ENCODE measurements at regions of chr1 and their contacts with region 1.

Region 1: GRCh38 chr1:109397538-109398342 is at the start of gene SORT1:
- DNase-seq: peak; percentile 67
- H3K4me3 Mint-ChIP-seq: peak within 1 kb of the TSS; percentile 77
- H3K27ac Mint-ChIP-seq: no peak within 1 kb of the TSS
- H3K4me1 Mint-ChIP-seq: peaks cover 17% of the 10 kb centered on the region
- H3K27me3 Mint-ChIP-seq: peaks cover 38% of the 10 kb centered on the region

Region 2: GRCh38 chr1:109201123-109201703 is 196.5 kb before region 1 on chr1:
- CTCF ChIA-PET with region 1: interaction called, 37 read pairs
- DNase-seq: peak; percentile 62
- H3K4me3 Mint-ChIP-seq: no peak overlapping the region
- H3K27ac Mint-ChIP-seq: no peak overlapping the region
- H3K4me1 Mint-ChIP-seq: peaks cover 14% of the 10 kb centered on the region
- H3K27me3 Mint-ChIP-seq: peaks cover 16% of the 10 kb centered on the region

Region 3: GRCh38 chr1:109263597-109264398 is 133.9 kb before region 1 on chr1:
- CTCF ChIA-PET with region 1: interaction called, 21 read pairs
- DNase-seq: peak; percentile 86
- H3K4me3 Mint-ChIP-seq: no peak overlapping the region
- H3K27ac Mint-ChIP-seq: no peak overlapping the region
- H3K4me1 Mint-ChIP-seq: peaks cover 3% of the 10 kb centered on the region
- H3K27me3 Mint-ChIP-seq: peaks cover 9% of the 10 kb centered on the region

Region 4: DNA sequence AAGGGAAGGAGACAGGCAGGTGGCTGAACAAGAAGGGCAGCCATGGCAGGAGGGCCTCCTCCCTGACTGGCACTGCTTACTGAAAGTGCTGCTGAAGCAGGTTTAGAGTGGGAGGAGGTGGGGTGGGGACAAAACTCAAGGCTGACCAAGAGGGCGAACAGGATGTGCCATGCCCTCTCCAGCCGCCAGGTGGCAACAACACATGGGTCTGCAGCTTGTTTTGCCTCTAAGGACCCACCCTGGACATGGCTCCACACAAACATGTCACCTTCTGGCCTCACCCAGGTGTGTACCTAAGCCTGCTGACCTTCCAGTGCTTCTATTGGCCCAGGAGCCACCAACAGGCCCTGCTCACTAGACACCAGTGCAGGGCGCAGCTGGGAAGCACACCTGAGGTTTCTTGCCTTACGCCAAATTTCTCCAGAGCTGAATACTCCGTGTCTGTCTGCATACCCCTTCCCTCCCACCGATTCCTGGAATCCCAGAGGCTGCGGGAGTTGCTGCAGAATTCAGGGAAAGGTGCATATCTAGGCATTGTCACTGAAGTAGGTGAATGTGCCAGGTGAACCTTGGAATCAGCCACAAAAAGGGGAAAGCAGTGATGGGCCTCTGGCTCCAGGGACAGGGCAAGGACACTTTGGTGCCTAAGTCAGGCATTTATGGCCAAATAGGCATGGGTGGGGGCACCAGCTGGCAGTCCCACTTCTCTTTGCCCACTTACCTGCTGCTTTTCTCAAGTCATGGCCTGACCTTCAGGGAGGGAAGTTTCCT is 120.1 kb before region 1 on chr1:
- CTCF ChIA-PET with region 1: interaction called, 115 read pairs
- DNase-seq: peak; percentile 76
- H3K4me3 Mint-ChIP-seq: no peak overlapping the region
- H3K27ac Mint-ChIP-seq: peak overlapping the region; percentile 24
- H3K4me1 Mint-ChIP-seq: peaks cover 40% of the 10 kb centered on the region
- H3K27me3 Mint-ChIP-seq: peaks cover 4% of the 10 kb centered on the region

Region 5: DNA sequence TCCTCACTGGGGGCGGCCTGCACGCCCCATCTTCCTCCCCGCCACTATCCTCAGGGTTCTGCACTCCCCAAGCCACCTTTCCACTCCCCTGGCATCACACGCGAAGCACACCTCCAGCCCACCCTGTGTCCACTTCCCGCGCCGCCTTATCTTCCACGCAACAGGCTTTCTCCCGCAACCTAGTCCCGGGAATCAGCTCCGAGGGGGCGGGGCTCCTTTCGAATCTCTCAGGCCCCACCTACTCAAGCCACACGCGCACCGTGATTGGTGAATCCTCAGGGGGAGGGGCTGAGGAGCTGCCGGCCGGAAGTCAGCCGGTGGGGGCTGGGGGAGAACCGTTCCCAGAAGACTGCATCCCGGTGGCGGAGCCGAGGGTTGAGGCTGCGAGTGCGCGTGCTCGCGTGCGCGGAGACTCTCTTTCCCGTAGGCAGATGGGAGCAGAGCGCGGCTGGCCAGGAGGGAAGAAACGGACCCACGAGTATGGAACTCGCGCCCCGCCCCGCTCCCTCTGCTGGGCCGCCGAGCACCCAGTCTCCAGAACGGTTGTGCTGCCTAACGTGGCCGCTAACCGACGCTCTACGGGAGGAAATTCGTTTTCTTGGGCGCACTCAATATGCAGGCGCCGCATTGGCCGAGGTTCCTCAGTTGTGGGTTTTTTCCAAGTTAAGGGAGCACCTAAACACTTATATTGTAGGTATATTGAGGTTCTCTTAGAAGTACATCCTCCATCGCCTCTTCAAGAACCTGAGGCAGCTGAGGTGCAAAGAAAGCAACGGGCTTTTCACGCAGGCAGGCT is 114.6 kb before region 1 on chr1 and contains the start of gene PSRC1:
- CTCF ChIA-PET with region 1: interaction called, 115 read pairs
- DNase-seq: peak; percentile 95
- H3K4me3 Mint-ChIP-seq: peak within 1 kb of the TSS; percentile 98
- H3K27ac Mint-ChIP-seq: peak within 1 kb of the TSS; percentile 90
- H3K4me1 Mint-ChIP-seq: peaks cover 38% of the 10 kb centered on the region
- H3K27me3 Mint-ChIP-seq: peaks cover 13% of the 10 kb centered on the region

Region 6: DNA sequence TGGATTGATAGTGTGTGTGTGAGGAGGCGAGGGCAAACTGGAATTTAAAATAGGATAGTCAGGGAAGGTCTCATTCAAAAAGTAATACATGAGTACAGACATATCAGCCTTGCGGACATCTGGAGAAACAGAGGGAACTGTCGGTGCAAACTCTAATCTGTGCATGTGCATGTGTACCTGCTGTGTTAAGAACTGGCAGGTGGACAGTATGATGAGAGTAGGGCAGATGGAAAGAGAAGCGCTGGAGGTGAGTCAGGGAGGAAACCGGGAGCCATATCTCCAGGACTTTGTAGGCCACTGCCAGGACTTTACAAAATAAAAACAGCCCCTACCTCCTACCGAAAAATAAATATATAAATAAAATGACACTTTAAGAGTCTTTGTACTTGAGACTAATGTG is 59.6 kb before region 1 on chr1:
- CTCF ChIA-PET with region 1: no interaction called
- DNase-seq: no peak
- H3K4me3 Mint-ChIP-seq: no peak overlapping the region
- H3K27ac Mint-ChIP-seq: no peak overlapping the region
- H3K4me1 Mint-ChIP-seq: no peaks in the 10 kb centered on the region
- H3K27me3 Mint-ChIP-seq: peaks cover under 1% of the 10 kb centered on the region

Region 7: DNA sequence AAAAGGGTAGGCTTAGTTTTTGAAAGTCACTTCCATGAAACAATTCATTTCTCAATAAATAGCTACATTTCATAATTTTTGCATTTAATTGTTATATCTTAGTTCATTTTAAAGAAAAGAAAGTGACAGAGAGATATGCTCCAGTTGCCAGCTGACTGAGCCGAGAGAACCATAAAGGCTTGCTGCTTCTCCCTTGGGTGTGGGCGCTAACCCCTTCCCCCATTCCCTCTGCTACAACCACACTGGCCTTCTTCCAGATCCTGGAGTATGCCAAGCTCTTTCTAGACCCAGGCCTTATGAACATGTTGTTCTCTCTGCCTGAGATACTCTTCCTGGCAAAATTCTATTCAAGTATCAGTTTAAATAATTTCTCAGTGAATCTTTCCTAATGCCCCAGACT is 12.3 kb before region 1 on chr1:
- CTCF ChIA-PET with region 1: interaction called, 15 read pairs
- DNase-seq: no peak
- H3K4me3 Mint-ChIP-seq: no peak overlapping the region
- H3K27ac Mint-ChIP-seq: no peak overlapping the region
- H3K4me1 Mint-ChIP-seq: peaks cover 5% of the 10 kb centered on the region
- H3K27me3 Mint-ChIP-seq: peaks cover 24% of the 10 kb centered on the region

Region 8: DNA sequence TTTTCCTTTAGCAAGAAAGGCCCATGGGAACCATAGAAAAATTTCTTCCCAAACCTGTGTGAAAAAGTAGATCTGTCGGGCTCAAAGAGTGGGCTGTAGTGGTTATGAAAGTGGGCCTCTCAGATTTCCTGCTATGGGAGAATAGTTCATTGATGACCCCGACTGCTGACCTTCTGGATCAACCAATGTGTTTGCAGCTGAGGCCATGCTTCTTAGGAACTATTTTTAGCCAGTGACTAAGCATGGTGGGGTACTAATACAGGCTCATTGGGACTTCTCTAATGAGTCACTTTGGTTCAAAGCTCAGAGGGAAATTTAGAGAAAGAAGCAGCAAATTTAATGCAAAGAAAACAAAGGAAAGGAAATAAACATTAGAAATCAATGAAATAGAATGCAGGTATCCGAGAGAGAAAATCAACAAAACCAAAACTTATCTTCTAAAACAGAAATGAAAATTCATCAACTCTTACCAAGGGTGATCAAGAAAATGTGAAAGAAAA is 41.1 kb after region 1 on chr1:
- CTCF ChIA-PET with region 1: no interaction called
- DNase-seq: no peak
- H3K4me3 Mint-ChIP-seq: no peak overlapping the region
- H3K27ac Mint-ChIP-seq: no peak overlapping the region
- H3K4me1 Mint-ChIP-seq: no peaks in the 10 kb centered on the region
- H3K27me3 Mint-ChIP-seq: peaks cover 13% of the 10 kb centered on the region

Region 9: DNA sequence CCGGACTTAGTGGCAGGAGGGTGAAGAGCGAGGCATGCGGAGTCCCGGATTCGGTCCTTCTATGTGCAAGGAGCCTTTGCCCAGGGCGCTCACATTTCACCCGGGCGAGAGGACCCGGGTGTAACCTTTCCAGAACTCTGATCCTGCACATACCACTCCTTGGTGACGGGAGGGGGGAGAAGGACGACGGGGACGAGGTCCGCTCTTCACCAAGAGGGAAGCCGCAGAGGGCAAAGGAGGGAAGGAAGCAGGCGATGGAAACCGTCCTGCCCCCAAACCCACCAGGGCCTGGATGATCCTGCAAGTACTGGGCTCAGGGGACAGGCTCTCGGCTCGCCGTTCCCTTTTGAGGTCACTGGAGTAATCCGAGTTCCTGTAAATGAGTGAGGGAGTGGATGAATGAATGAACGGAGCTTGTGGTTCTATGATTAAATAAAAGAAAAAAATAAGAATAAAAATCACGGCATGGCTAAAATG is 69.6 kb after region 1 on chr1:
- CTCF ChIA-PET with region 1: no interaction called
- DNase-seq: no peak
- H3K4me3 Mint-ChIP-seq: no peak overlapping the region
- H3K27ac Mint-ChIP-seq: no peak overlapping the region
- H3K4me1 Mint-ChIP-seq: peaks cover 11% of the 10 kb centered on the region
- H3K27me3 Mint-ChIP-seq: peaks cover 98% of the 10 kb centered on the region

Region 10: GRCh38 chr1:109521002-109521951 is 123.5 kb after region 1 on chr1:
- CTCF ChIA-PET with region 1: no interaction called
- DNase-seq: no peak
- H3K4me3 Mint-ChIP-seq: no peak overlapping the region
- H3K27ac Mint-ChIP-seq: no peak overlapping the region
- H3K4me1 Mint-ChIP-seq: no peaks in the 10 kb centered on the region
- H3K27me3 Mint-ChIP-seq: peaks cover 34% of the 10 kb centered on the region